Heart left ventricle (tissue), 16 donors: ENCODE measurements at regions of chr6 and their contacts with region 1.

Region 1: GRCh38 chr6:6599468-6599873 is 11.0 kb downstream of the LY86 start:
- DNase-seq: peak in 4 of 5 donors; percentile 54 to 73 (median 60)
- ATAC-seq: peak; percentile 82 to 89 (median 86)
- H3K4me3 ChIP-seq: no peak overlapping the region
- H3K27ac ChIP-seq: peak overlapping the region in 4 of 12 donors; percentile 15 to 45 (median 36)
- H3K4me1 ChIP-seq: peaks cover 0 to 46% (median 35%) of the 10 kb centered on the region in 12 donors
- H3K27me3 ChIP-seq: no peaks in the 10 kb centered on the region
- CTCF ChIP-seq: no peak
- POLR2A ChIP-seq: no peak

Region 2: GRCh38 chr6:6654599-6655575 is 55.4 kb after region 1 on chr6:
- intact Hi-C with region 1: loop called in 5 of 10 experiments (anchors 2 to 10 kb)
- DNase-seq: peak in 4 of 5 donors; percentile 62 to 75 (median 70)
- ATAC-seq: peak; percentile 87 to 93 (median 90)
- H3K4me3 ChIP-seq: no peak overlapping the region
- H3K27ac ChIP-seq: peak overlapping the region in 11 of 12 donors; percentile 34 to 83 (median 73)
- H3K4me1 ChIP-seq: peaks cover 0 to 77% (median 33%) of the 10 kb centered on the region in 12 donors
- H3K27me3 ChIP-seq: no peaks in the 10 kb centered on the region
- CTCF ChIP-seq: no peak
- POLR2A ChIP-seq: no peak